ENCODE measurements at regions of chr7 and their contacts with region 1.

Region 1: GRCh38 chr7:74449809-74450397 is 3.8 kb upstream of the GTF2IRD1 start:
- DNase-seq: peak in 1 of 3 donors; percentile 63
- ATAC-seq: peak; percentile 28 to 32
- H3K4me3 ChIP-seq: no peak overlapping the region
- H3K27ac ChIP-seq: no peak overlapping the region
- H3K4me1 ChIP-seq: no peaks in the 10 kb centered on the region
- H3K27me3 ChIP-seq: no peaks in the 10 kb centered on the region

Region 2: DNA sequence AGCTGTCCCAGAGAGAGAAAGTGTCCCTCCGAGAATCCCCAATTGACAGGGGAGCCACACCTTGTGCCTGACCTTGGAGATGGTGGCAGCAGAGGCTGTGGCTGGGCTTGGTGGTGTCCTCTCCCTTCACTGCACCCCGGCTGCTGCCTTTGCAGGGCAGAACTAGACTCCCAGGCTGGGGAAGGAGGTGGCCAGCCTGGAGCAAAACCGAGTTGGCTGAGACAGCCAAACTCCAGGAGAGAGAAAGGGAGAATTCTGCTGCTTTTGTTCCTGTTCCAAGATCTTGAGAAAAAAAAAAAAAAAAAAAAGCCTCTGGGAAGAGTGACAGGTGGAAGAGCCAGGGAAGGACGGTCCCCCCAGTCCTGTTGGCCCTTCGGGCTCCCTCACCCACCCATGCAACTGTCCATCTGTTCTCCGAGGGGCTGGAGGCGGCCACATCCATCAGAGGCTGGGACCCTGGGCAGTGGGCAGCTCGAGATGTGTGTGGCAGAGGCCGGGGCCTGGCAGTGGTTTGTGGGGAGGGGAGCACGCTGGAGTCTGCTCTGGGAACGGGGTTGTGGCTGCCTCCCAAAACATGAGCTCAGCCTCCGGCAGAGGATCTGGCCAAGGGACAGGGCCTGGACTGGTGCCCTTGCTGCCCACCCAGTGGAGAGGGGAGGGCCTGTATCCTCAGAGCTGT is 125.2 kb before region 1 on chr7:
- intact Hi-C with region 1: no loop called
- DNase-seq: peak; percentile 31 to 83 (median 81)
- ATAC-seq: peak; percentile 34 to 54
- H3K4me3 ChIP-seq: no peak overlapping the region
- H3K27ac ChIP-seq: no peak overlapping the region
- H3K4me1 ChIP-seq: no peaks in the 10 kb centered on the region
- H3K27me3 ChIP-seq: no peaks in the 10 kb centered on the region

Region 3: DNA sequence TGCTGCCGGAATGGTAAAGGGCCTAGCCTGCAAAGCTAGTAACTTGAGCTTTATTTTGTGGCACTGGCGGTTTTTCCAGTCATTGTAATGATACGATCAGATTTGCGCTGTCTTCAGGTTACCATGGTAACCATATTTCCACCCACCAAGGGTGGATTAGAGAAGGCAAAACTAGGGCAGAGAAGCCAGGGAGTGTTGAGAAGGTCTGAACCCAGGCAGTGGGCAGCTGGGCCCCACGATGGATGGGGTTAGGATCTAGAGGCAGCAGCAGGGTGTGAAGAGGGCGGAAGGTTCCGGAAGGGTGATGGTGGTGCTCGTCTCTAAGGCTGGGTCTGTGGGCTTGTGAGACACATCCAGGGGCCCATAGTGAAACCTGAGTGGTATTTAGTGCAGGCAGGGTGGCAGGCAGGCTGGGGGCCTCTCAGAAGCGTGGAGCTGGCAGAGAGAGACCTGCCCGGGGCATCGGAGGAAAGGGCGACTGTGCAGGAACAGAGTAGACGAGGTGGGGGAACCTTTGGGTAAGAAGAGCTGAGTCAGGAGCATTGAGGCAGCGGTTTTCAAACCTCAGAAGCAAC is 119.7 kb after region 1 on chr7:
- intact Hi-C with region 1: loop called in 3 of 4 experiments (anchors 5 to 10 kb)
- DNase-seq: no peak
- ATAC-seq: no peak
- H3K4me3 ChIP-seq: no peak overlapping the region
- H3K27ac ChIP-seq: no peak overlapping the region
- H3K4me1 ChIP-seq: no peaks in the 10 kb centered on the region
- H3K27me3 ChIP-seq: no peaks in the 10 kb centered on the region

Region 4: GRCh38 chr7:74656837-74657691 is 207.2 kb after region 1 on chr7:
- intact Hi-C with region 1: loop called in 1 of 4 experiments (anchors 10 kb)
- DNase-seq: peak; percentile 99 to 100 (median 100)
- ATAC-seq: peak; percentile 95 to 96
- H3K4me3 ChIP-seq: peak overlapping the region; percentile 97
- H3K27ac ChIP-seq: peak overlapping the region; percentile 97
- H3K4me1 ChIP-seq: peaks cover 20% of the 10 kb centered on the region
- H3K27me3 ChIP-seq: no peaks in the 10 kb centered on the region